WTC11 (cell line): ENCODE measurements at regions of chr7 and their contacts with region 1.

Region 1: DNA sequence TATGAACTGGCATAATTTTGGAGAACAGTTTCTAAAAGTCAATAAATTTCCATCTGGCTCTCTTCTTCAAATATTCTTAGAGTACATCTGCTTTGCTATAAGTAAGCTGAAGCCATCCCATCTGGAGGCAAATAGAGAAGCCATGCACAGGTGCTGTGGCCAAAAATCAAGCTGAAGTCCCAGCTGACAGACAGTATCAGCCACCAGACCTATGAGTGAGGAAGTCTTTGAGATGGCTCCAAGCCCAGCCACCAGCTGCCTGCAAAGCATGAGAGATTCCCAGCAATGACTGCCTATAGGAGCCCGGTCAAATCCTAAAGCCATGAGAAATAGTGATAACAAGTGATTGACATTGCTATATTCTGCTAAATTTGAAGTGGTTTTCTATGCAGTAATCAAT is 21.7 kb upstream of the PRSS58 start:
- DNase-seq: no peak
- ATAC-seq: no peak
- H3K4me3 Mint-ChIP-seq: no peak overlapping the region
- H3K27ac Mint-ChIP-seq: no peak overlapping the region
- H3K4me1 Mint-ChIP-seq: no peaks in the 10 kb centered on the region
- H3K27me3 Mint-ChIP-seq: peaks cover 9% of the 10 kb centered on the region; the same call in 1 of the 2 replicates
- CTCF ChIP-seq: no peak

Region 2: DNA sequence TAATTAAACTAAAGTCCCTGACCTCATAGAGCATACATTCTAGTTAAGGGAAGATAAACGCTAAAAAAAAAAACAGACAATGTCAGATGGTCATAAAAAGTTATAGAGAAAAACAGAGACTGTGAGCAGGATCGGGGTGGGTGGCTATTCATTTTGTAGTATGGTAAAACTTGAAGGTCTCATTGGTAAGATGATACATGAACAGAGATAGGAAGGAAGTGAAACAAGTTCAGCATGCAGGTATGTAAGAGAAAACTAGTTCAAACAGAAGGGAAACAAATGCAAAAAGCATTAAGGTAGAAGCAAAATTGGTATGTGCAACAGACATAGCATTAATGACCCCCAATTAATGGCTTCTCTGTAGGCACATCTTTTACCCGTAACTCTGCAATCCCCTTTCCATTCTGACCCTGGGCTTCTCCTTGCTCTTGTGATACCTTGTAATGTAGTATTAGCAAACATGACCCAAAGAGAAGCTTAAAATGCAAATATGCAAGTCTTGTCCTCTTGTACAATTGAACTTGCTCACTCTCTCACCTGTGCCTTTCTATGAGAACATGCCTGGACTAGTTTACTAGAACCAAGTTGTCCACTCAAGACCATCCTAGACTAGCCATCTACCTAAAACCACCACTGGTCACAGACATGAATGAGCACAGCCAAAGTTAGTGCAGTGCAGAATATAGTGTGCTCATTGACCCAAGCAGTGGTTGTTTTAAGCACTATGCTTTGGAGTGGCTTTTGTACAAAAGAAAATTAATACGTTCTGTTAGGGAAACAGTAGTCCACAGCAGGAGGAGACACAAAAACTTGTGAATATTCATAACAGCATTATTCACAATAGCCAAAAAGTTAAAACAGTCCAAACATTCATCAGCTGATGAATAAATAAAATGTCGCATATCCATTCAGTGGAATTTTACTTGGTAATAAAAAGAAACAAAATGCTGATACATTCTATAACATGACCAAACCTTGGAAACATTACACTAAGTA is 1411.8 kb before region 1 on chr7:
- CTCF ChIA-PET with region 1: no interaction called
- POLR2A ChIA-PET with region 1: interaction called, 10 read pairs
- DNase-seq: no peak
- ATAC-seq: no peak
- H3K4me3 Mint-ChIP-seq: no peak overlapping the region
- H3K27ac Mint-ChIP-seq: peak overlapping the region; percentile 46
- H3K4me1 Mint-ChIP-seq: peaks cover 27% of the 10 kb centered on the region
- H3K27me3 Mint-ChIP-seq: no peaks in the 10 kb centered on the region
- CTCF ChIP-seq: no peak